ENCODE measurements at regions of chr16 and their contacts with region 1.

Region 1: GRCh38 chr16:2752035-2752849 is at the start of gene SRRM2:
- DNase-seq: peak; percentile 94
- ATAC-seq: peak; percentile 85
- H3K4me3 Mint-ChIP-seq: peak within 1 kb of the TSS; percentile 90
- H3K27ac Mint-ChIP-seq: peak within 1 kb of the TSS; percentile 98
- H3K4me1 Mint-ChIP-seq: peaks cover 52% of the 10 kb centered on the region
- H3K27me3 Mint-ChIP-seq: no peaks in the 10 kb centered on the region
- CTCF ChIP-seq: no peak
- total RNA-seq, gene SRRM2: 891 and 963 TPM in 2 replicates

Region 2: GRCh38 chr16:1782352-1783091 is 969.7 kb before region 1 on chr16 and contains the starts of genes NUBP2 and SPSB3:
- CTCF ChIA-PET with region 1: no interaction called
- POLR2A ChIA-PET with region 1: interaction called, 3 read pairs
- intact Hi-C with region 1: loop called (anchors 2 kb)
- DNase-seq: peak; percentile 91
- ATAC-seq: peak; percentile 88
- H3K4me3 Mint-ChIP-seq: peak within 1 kb of the TSS; percentile 89
- H3K27ac Mint-ChIP-seq: peak within 1 kb of the TSS; percentile 87
- H3K4me1 Mint-ChIP-seq: peaks cover 24% of the 10 kb centered on the region
- H3K27me3 Mint-ChIP-seq: no peaks in the 10 kb centered on the region
- CTCF ChIP-seq: no peak
- total RNA-seq, gene NUBP2: 53.7 and 54.2 TPM in 2 replicates
- total RNA-seq, gene SPSB3: 36.4 and 40.3 TPM in 2 replicates

Region 3: GRCh38 chr16:2513405-2514322 is 238.6 kb before region 1 on chr16 and contains the start of gene ATP6V0C:
- CTCF ChIA-PET with region 1: no interaction called
- POLR2A ChIA-PET with region 1: no interaction called
- intact Hi-C with region 1: loop called (anchors 1 kb)
- DNase-seq: peak; percentile 95
- ATAC-seq: peak; percentile 78
- H3K4me3 Mint-ChIP-seq: peak within 1 kb of the TSS; percentile 94
- H3K27ac Mint-ChIP-seq: peak within 1 kb of the TSS; percentile 92
- H3K4me1 Mint-ChIP-seq: peaks cover 85% of the 10 kb centered on the region
- H3K27me3 Mint-ChIP-seq: no peaks in the 10 kb centered on the region
- CTCF ChIP-seq: no peak
- total RNA-seq, gene ATP6V0C: 74.9 and 91.4 TPM in 2 replicates

Region 4: GRCh38 chr16:2715519-2715918 is 36.7 kb before region 1 on chr16:
- CTCF ChIA-PET with region 1: no interaction called
- POLR2A ChIA-PET with region 1: interaction called, 3 read pairs
- intact Hi-C with region 1: loop called (anchors 2 kb)
- DNase-seq: peak; percentile 79
- ATAC-seq: peak; percentile 96
- H3K4me3 Mint-ChIP-seq: no peak overlapping the region
- H3K27ac Mint-ChIP-seq: no peak overlapping the region
- H3K4me1 Mint-ChIP-seq: peaks cover 11% of the 10 kb centered on the region
- H3K27me3 Mint-ChIP-seq: peaks cover 2% of the 10 kb centered on the region
- CTCF ChIP-seq: no peak

Region 5: GRCh38 chr16:2777231-2777902 is 25.1 kb after region 1 on chr16 and contains the start of gene ELOB:
- CTCF ChIA-PET with region 1: no interaction called
- POLR2A ChIA-PET with region 1: interaction called, 68 read pairs
- intact Hi-C with region 1: loop called (anchors 1 kb)
- DNase-seq: peak; percentile 92
- ATAC-seq: peak; percentile 94
- H3K4me3 Mint-ChIP-seq: peak within 1 kb of the TSS; percentile 94
- H3K27ac Mint-ChIP-seq: peak within 1 kb of the TSS; percentile 95
- H3K4me1 Mint-ChIP-seq: peaks cover 28% of the 10 kb centered on the region
- H3K27me3 Mint-ChIP-seq: no peaks in the 10 kb centered on the region
- CTCF ChIP-seq: no peak
- total RNA-seq, gene ELOB: 172 and 190 TPM in 2 replicates

Region 6: GRCh38 chr16:2816751-2817339 is 64.6 kb after region 1 on chr16 and contains the start of gene PRSS21:
- CTCF ChIA-PET with region 1: no interaction called
- POLR2A ChIA-PET with region 1: no interaction called
- intact Hi-C with region 1: no loop called
- DNase-seq: no peak
- ATAC-seq: no peak
- H3K4me3 Mint-ChIP-seq: no peak within 1 kb of the TSS
- H3K27ac Mint-ChIP-seq: no peak within 1 kb of the TSS
- H3K4me1 Mint-ChIP-seq: no peaks in the 10 kb centered on the region
- H3K27me3 Mint-ChIP-seq: peaks cover 6% of the 10 kb centered on the region
- CTCF ChIP-seq: no peak
- total RNA-seq, gene PRSS21: 2.4 and 3.2 TPM in 2 replicates

Region 7: GRCh38 chr16:2911580-2912329 is 159.5 kb after region 1 on chr16 and contains the start of gene FLYWCH1:
- CTCF ChIA-PET with region 1: no interaction called
- POLR2A ChIA-PET with region 1: interaction called, 8 read pairs
- intact Hi-C with region 1: loop called (anchors 10 kb)
- DNase-seq: peak; percentile 96
- ATAC-seq: peak; percentile 97
- H3K4me3 Mint-ChIP-seq: peak within 1 kb of the TSS; percentile 93
- H3K27ac Mint-ChIP-seq: peak within 1 kb of the TSS; percentile 82
- H3K4me1 Mint-ChIP-seq: peaks cover 27% of the 10 kb centered on the region
- H3K27me3 Mint-ChIP-seq: no peaks in the 10 kb centered on the region
- CTCF ChIP-seq: no peak
- total RNA-seq, gene FLYWCH1: 53.5 and 59.9 TPM in 2 replicates

Measured in activated B cell treated with CpG ODN at 0.5 μM for 24 hours (primary cell).